Panc1 (cell line): ENCODE measurements at regions of chr2 and their contacts with region 1.

Region 1: DNA sequence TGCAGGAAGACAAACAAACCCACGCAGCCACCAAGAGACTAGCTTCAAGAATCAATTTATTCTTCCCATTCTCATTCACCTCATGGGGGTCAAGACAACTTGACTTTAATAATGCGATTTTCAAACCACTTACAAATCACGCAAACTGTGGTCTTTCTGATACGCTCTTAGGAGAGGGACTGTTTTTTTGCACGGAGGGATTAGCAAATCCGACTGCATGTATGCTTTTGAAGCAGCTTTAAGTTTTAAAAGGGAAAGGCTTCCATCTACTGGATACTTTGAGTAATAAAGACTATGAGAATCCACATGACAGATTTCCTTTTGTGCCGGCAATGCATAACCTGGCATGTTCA is 322.9 kb upstream of the KCNJ3 start:
- DNase-seq: peak; percentile 25
- ATAC-seq: peak; percentile 70; the same call in 1 of the 2 replicates
- H3K4me3 ChIP-seq: peak overlapping the region in 1 of 2 experiments; percentile 15; a peak in 2 of 4 replicates
- H3K27ac ChIP-seq: no peak overlapping the region
- H3K4me1 ChIP-seq: no peaks in the 10 kb centered on the region
- H3K27me3 ChIP-seq: no peaks in the 10 kb centered on the region
- CTCF ChIP-seq: peak; percentile 53; the same call in 1 of the 2 replicates

Region 2: DNA sequence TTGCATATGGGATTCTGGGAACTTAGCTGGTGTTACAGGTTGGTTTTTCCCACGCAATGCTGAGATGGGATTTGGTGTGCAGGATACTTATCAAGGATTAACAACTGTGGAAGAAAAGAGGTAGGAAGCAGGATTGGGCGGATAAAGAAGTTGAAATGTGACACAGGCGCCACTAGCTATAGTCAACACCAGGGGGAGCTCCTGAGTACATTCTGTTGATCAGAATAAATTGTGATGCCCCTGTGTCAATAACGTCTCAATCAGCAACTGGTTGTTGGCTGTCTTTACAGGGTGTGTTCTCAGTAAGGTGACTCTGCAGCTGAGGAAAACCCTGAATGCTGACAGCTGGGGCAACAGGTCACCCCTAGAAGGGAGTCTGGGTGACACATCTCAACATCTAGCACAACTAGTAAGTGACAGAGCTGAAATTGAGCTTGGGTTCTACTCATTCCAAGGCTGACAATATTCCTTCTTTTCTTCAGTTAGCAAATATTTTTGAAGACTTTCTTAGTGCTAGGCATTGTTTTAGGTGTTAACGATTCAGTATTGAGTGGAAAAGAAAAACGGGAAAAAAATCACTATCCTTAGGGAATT is 1514.1 kb before region 1 on chr2:
- CTCF ChIA-PET with region 1: no interaction called
- POLR2A ChIA-PET with region 1: no interaction called
- in situ Hi-C with region 1: no loop called
- intact Hi-C with region 1: loop called (anchors 10 kb)
- DNase-seq: peak; percentile 4
- ATAC-seq: no peak
- H3K4me3 ChIP-seq: no peak overlapping the region
- H3K27ac ChIP-seq: no peak overlapping the region
- H3K4me1 ChIP-seq: no peaks in the 10 kb centered on the region
- H3K27me3 ChIP-seq: no peaks in the 10 kb centered on the region
- CTCF ChIP-seq: peak; percentile 81

Region 3: GRCh38 chr2:153543639-153544071 is 831.9 kb before region 1 on chr2:
- CTCF ChIA-PET with region 1: no interaction called
- POLR2A ChIA-PET with region 1: no interaction called
- in situ Hi-C with region 1: no loop called
- intact Hi-C with region 1: loop called (anchors 10 kb)
- DNase-seq: no peak
- ATAC-seq: no peak
- H3K4me3 ChIP-seq: no peak overlapping the region
- H3K27ac ChIP-seq: no peak overlapping the region
- H3K4me1 ChIP-seq: no peaks in the 10 kb centered on the region
- H3K27me3 ChIP-seq: no peaks in the 10 kb centered on the region
- CTCF ChIP-seq: no peak

Region 4: GRCh38 chr2:154439156-154439555 is 63.6 kb after region 1 on chr2:
- CTCF ChIA-PET with region 1: no interaction called
- POLR2A ChIA-PET with region 1: no interaction called
- in situ Hi-C with region 1: no loop called
- intact Hi-C with region 1: no loop called
- DNase-seq: no peak
- ATAC-seq: no peak
- H3K4me3 ChIP-seq: no peak overlapping the region
- H3K27ac ChIP-seq: no peak overlapping the region
- H3K4me1 ChIP-seq: no peaks in the 10 kb centered on the region
- H3K27me3 ChIP-seq: no peaks in the 10 kb centered on the region
- CTCF ChIP-seq: peak; percentile 29; the same call in 1 of the 2 replicates

Region 5: GRCh38 chr2:154537843-154538450 is 162.4 kb after region 1 on chr2:
- CTCF ChIA-PET with region 1: no interaction called
- POLR2A ChIA-PET with region 1: no interaction called
- in situ Hi-C with region 1: no loop called
- intact Hi-C with region 1: no loop called
- DNase-seq: no peak
- ATAC-seq: no peak
- H3K4me3 ChIP-seq: no peak overlapping the region
- H3K27ac ChIP-seq: no peak overlapping the region
- H3K4me1 ChIP-seq: no peaks in the 10 kb centered on the region
- H3K27me3 ChIP-seq: no peaks in the 10 kb centered on the region
- CTCF ChIP-seq: no peak